MCF 10A (cell line): ENCODE measurements at regions of chr13 and their contacts with region 1.

Region 1: DNA sequence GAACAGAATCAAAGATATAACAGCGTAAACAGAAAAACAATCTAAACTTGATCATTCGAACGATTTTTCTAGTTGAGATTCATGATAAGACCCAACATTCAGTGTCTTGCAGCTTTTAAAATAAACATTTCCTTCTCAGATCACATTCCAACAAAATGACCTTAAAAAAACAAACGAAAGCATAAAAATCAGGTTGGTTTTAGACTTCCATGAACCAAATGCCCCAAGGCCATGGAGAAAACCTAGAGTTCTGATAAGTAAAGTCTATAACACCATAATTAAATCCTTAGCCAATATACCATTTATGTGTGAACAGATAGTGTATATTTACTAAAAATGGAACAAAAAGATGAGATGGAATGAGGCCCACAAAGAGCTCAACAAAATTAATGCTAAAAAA is 55.6 kb downstream of the CAB39L start:
- DNase-seq: no peak
- H3K4me3 Mint-ChIP-seq: no peak overlapping the region
- H3K27ac Mint-ChIP-seq: no peak overlapping the region
- H3K4me1 Mint-ChIP-seq: no peaks in the 10 kb centered on the region
- H3K27me3 Mint-ChIP-seq: no peaks in the 10 kb centered on the region
- CTCF ChIP-seq: no peak

Region 2: GRCh38 chr13:49374585-49375290 is 13.5 kb before region 1 on chr13:
- CTCF ChIA-PET with region 1: interaction called, 3 read pairs
- POLR2A ChIA-PET with region 1: interaction called, 10 read pairs
- intact Hi-C with region 1: no loop called
- DNase-seq: peak; percentile 75
- H3K4me3 Mint-ChIP-seq: no peak overlapping the region
- H3K27ac Mint-ChIP-seq: no peak overlapping the region
- H3K4me1 Mint-ChIP-seq: peaks cover 11% of the 10 kb centered on the region
- H3K27me3 Mint-ChIP-seq: no peaks in the 10 kb centered on the region
- CTCF ChIP-seq: no peak